ENCODE measurements at regions of chr15 and their contacts with region 1.

Region 1: DNA sequence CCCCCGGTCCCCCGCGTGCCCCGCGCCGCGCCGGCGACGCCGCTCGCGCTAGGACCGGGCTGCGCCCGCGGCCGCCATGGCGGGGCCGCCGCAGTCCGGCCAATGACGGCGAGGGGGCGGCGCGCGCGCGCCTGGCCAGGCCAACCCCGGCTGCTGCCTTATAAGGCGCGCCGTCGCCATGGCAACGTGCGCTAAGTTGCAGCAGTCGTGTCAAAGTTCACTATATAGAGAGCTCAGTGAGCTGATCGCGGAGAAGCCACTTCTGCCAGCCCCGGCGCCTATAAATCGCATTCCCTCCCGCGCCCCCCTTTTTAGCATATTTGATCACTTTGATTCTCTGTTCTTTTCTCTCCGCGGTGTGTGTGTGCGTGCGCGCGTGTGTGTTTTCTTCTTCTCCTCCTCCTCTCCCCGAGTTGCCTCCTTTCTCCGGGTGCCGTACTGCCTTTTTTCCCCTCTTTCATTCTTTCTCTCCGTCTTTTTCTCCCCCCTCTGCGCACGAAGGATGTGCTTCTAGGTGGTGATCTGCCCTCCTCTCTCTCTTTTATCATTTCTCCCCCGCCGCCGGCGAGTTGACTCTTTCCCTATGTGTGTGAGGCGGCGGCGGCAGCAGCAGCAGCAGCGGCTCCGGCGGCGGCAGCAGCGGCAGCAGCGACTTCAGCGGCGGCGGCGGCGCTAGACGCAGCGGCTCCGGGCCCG is at the start of gene NR2F2:
- DNase-seq: peak; percentile 89
- H3K4me3 ChIP-seq: peak within 1 kb of the TSS; percentile 66
- H3K27me3 ChIP-seq: no peaks in the 10 kb centered on the region
- CTCF ChIP-seq: no peak
- polyA plus RNA-seq, gene NR2F2: 47.0 and 50.0 TPM in 2 replicates

Region 2: DNA sequence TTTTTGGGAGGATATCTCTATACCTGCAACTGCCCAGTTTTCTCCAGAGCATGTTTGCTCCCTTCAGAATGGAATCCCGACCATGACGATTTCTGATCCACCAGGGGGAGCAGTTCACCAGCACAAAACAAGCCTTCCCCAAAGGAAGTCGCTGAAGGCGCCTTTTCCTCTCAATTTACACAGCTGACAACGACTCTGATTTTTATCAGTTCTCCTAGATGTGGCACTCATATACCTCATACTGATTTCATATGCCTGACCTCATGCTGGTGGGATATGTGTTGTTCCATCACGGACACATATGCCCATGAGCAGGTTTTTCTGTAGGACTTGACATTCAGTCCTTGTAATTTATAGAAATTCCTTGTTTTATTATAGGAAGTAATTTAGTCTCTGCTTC is 1071.1 kb before region 1 on chr15:
- CTCF ChIA-PET with region 1: interaction called, 17 read pairs
- POLR2A ChIA-PET with region 1: no interaction called
- DNase-seq: no peak
- H3K4me3 ChIP-seq: no peak overlapping the region
- H3K27me3 ChIP-seq: no peaks in the 10 kb centered on the region
- CTCF ChIP-seq: peak; percentile 77

Region 3: DNA sequence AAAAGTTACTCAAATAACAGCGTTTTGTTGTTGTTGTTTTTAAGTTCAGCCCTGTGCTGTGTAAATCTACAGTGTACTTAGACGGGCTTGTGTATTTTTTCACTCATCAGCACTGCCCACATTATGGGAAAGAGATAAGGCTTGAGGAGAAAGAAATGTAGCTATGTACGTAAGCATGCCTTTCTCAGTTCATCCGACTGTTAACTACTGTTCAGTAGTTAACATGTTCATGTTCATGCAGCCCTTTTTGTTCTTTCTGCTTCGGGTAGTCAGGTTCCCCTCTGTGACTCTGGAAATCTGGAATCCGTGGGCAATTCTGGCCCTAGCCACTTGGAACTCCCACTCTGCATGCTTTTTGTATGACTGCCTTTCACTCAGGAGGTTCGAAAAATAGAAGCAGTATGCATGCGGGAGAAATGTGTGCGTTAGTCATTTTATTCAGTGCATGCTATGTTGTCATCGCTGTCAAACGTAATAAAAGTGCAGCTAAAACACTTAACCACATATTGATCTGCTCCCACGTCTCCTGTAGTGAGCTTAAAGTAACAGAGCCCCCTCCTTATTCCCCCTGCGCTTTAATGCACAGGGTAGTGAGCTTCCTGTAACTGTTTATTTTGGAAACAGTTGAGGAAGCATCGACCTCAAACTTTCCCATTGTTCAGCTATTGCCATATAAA is 283.2 kb before region 1 on chr15:
- CTCF ChIA-PET with region 1: interaction called, 5 read pairs
- POLR2A ChIA-PET with region 1: interaction called, 11 read pairs
- DNase-seq: peak; percentile 90
- H3K4me3 ChIP-seq: peak overlapping the region; percentile 2
- H3K27me3 ChIP-seq: no peaks in the 10 kb centered on the region
- CTCF ChIP-seq: peak; percentile 28

Region 4: DNA sequence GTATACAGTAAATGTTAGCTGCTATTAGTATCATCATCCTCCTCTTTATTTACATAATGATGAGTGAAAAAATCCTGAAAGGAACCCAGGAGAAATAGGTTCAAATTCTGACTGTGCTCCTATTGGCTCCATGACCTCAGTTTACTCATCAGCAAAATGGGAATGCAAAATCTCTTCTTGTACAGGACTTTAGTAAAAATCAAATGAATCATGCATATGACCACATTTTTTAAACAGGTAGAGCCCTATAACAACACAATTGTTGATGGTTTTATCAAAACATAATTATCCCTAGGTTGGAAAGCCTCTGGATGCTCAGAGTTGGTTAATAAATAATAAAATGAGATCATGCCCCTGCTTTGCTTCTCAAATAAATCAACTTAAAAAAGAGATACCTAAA is 16.1 kb before region 1 on chr15:
- CTCF ChIA-PET with region 1: no interaction called
- POLR2A ChIA-PET with region 1: no interaction called
- DNase-seq: no peak
- H3K4me3 ChIP-seq: no peak overlapping the region
- H3K27me3 ChIP-seq: no peaks in the 10 kb centered on the region
- CTCF ChIP-seq: no peak

Region 5: GRCh38 chr15:96353930-96354730 is 23.5 kb after region 1 on chr15:
- CTCF ChIA-PET with region 1: interaction called, 11 read pairs
- POLR2A ChIA-PET with region 1: interaction called, 9 read pairs
- DNase-seq: no peak
- H3K4me3 ChIP-seq: peak overlapping the region; percentile 60
- H3K27me3 ChIP-seq: no peaks in the 10 kb centered on the region
- CTCF ChIP-seq: peak; percentile 60